Calu3 (cell line): ENCODE measurements at regions of chr18 and their contacts with region 1.

Region 1: DNA sequence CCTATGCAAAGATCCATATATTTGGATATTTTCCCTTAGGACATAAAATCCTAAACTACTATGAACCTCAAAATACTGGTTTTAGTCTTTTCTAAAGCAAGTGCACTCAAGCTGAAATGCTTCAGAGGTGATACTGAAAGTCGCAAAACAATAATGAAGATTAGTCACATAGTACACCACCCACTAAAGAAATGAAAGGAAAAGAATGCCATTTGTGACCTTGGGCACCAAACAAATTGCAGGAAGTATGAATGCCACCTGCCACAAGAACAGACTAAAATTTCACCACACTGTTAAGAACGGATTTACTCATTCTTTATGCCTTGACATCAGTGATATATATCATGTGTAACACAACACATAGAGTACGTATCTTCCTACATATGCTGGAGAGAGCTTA is 161.5 kb downstream of the ZNF521 start:
- DNase-seq: no peak
- H3K4me3 Mint-ChIP-seq: no peak overlapping the region
- H3K27ac Mint-ChIP-seq: no peak overlapping the region
- H3K4me1 Mint-ChIP-seq: no peaks in the 10 kb centered on the region
- H3K27me3 Mint-ChIP-seq: peaks cover 58% of the 10 kb centered on the region
- CTCF ChIP-seq: no peak

Region 2: DNA sequence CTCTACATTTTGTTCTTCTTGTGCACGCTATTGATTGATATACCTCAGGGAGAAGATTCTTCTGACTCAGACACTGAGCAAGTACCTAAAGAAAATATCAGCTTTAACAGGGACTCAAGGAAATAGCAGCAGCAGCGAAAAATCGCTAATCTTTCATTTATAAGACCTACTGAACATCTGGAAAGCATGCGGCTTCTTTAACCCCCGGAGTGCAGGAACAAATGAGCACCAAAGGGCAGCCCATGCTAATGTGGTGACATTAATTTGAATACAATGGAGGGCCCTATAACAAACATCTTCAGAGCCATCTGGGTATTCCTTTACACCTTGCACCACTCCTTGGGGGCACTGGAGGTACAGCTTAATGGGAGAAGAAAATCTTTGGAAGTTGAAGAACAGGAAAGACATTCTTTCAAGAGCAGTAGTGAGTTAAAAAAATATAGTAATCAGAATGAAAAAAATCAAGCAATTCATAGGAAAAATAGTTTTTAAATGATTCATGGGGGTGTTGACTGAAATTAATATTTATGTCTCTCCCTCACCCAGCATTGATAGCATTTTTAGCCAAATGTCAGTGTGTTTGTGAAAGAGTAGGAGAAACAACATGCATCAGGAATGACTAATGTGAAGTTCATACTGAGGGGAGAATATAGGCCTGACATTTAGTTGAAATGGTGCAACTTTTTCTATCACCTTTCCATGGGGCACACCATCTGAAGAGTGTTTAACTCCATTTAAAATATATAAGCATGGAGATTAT is 448.3 kb before region 1 on chr18:
- CTCF ChIA-PET with region 1: no interaction called
- intact Hi-C with region 1: no loop called
- DNase-seq: no peak
- H3K4me3 Mint-ChIP-seq: no peak overlapping the region
- H3K27ac Mint-ChIP-seq: no peak overlapping the region
- H3K4me1 Mint-ChIP-seq: no peaks in the 10 kb centered on the region
- H3K27me3 Mint-ChIP-seq: peaks cover 52% of the 10 kb centered on the region
- CTCF ChIP-seq: no peak

Region 3: DNA sequence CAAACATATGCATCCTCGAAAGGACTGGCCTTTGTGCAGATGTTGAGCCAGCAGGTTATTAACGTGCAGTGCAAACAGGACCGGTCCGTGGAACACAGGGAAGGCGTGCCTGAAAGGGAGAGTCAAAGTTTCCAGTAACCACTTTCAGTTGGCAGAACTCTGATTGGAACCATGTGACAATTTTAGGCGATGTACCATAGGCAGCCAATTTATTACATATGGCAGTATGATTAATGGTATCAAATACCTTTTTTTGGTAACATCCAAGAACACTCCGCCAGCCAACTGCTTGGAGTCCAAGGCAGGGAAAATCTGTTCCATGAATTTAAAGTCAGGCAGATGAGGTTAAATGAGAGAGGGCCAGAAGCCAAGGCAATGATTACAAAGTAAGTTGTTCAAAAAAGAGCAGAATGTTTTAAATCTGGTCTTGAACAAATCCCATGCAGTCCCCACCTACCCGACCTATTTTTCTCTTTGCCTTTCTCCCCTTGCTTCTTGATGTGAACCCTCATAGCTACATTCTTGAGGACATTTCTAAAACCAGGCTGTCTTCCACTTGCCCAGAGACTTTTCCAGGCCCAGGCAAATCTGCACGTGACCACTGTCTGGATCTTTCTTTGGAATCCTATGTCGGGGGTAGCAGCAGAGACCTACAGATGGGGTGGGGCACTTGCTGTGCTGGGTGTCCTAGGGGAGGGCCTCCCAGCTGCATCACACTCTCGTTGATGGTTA is 378.4 kb before region 1 on chr18:
- CTCF ChIA-PET with region 1: no interaction called
- intact Hi-C with region 1: no loop called
- DNase-seq: no peak
- H3K4me3 Mint-ChIP-seq: no peak overlapping the region
- H3K27ac Mint-ChIP-seq: no peak overlapping the region
- H3K4me1 Mint-ChIP-seq: no peaks in the 10 kb centered on the region
- H3K27me3 Mint-ChIP-seq: peaks cover 66% of the 10 kb centered on the region
- CTCF ChIP-seq: no peak

Region 4: DNA sequence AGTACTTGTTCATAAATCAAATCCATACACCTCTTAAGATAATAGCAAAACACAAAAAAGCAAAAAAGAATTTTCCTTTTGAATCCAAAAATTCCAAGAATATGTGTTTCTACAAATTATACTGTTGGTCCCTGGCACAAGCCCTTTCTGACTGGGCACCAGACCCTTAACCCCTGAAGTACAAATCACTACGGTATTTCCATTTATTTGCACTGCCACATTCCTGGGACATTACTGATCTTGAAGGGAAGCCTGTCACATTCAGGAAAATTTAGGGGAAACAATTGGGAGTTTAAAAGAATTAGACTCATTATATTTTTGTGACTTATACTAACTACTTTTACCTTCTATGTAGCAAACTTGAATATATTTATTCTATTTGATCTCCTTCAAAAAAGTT is 62.7 kb after region 1 on chr18:
- CTCF ChIA-PET with region 1: no interaction called
- intact Hi-C with region 1: loop called (anchors 10 kb)
- DNase-seq: no peak
- H3K4me3 Mint-ChIP-seq: no peak overlapping the region
- H3K27ac Mint-ChIP-seq: no peak overlapping the region
- H3K4me1 Mint-ChIP-seq: no peaks in the 10 kb centered on the region
- H3K27me3 Mint-ChIP-seq: peaks cover 19% of the 10 kb centered on the region
- CTCF ChIP-seq: no peak

Region 5: DNA sequence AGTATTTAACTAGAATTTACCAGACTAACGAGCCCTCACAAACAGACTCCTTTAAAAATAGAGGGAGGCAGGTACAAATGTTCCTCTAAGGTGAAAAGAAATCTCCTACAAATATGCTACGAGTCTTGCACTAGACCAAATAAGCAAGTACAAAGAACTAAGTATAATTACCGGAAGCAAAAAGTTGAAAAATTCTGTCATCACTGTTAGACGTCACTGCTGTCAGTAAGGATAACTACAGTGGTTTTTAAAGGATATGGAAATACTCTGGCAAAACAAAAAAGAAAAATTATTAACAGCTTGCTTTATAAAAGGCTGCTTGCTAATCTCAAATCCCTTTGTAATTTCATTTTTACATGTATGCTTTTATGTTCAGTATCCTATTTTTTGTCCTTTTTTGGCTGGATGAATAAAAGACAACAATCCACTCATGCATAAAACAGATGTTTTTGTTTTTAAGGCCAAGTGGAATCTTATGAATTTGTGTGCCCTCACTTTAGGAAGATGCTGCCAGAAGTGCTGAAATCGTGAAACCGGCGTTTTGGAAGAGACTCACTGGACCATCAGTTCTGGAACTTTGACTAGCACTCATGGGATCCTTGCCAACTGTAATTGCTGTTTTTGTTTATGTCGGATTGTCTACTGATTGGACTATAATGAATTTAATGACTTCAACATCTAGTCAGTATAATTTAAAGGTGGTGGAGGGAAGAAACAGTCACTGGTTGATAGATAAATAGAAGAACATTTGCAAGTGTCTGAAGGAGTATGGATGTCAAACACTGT is 154.8 kb after region 1 on chr18:
- CTCF ChIA-PET with region 1: no interaction called
- intact Hi-C with region 1: no loop called
- DNase-seq: no peak
- H3K4me3 Mint-ChIP-seq: no peak overlapping the region
- H3K27ac Mint-ChIP-seq: no peak overlapping the region
- H3K4me1 Mint-ChIP-seq: no peaks in the 10 kb centered on the region
- H3K27me3 Mint-ChIP-seq: peaks cover 39% of the 10 kb centered on the region
- CTCF ChIP-seq: no peak